ENCODE measurements at regions of chr19 and their contacts with region 1.

Region 1: GRCh38 chr19:40465557-40466150 is at the start of gene BLVRB:
- DNase-seq: peak; percentile 99 to 100
- H3K4me3 ChIP-seq: peak within 1 kb of the TSS; percentile 68 to 92
- H3K27ac ChIP-seq: peak within 1 kb of the TSS; percentile 80 to 86
- H3K4me1 ChIP-seq: peaks cover 5 to 22% of the 10 kb centered on the region in 2 donors
- H3K27me3 ChIP-seq: no peaks in the 10 kb centered on the region
- CTCF ChIP-seq: no peak
- total RNA-seq, gene BLVRB: 295 TPM

Region 2: GRCh38 chr19:40348125-40348913 is 117.3 kb before region 1 on chr19 and contains the starts of genes C19orf47 and PLD3:
- intact Hi-C with region 1: loop called (anchors 5 kb)
- DNase-seq: peak; percentile 99 to 100
- H3K4me3 ChIP-seq: peak within 1 kb of the TSS; percentile 80 to 94
- H3K27ac ChIP-seq: peak within 1 kb of the TSS; percentile 51 to 85
- H3K4me1 ChIP-seq: peaks cover 4 to 10% of the 10 kb centered on the region in 2 donors
- H3K27me3 ChIP-seq: no peaks in the 10 kb centered on the region
- CTCF ChIP-seq: no peak
- total RNA-seq, gene C19orf47: 10.4 TPM
- total RNA-seq, gene PLD3: 345 TPM

Region 3: GRCh38 chr19:40444192-40445028 is 21.2 kb before region 1 on chr19 and contains the start of gene SERTAD3:
- intact Hi-C with region 1: loop called (anchors 1 kb)
- DNase-seq: peak; percentile 92 to 99
- H3K4me3 ChIP-seq: peak within 1 kb of the TSS; percentile 93 to 96
- H3K27ac ChIP-seq: peak within 1 kb of the TSS; percentile 96 to 97
- H3K4me1 ChIP-seq: peaks cover 3 to 13% of the 10 kb centered on the region in 2 donors
- H3K27me3 ChIP-seq: no peaks in the 10 kb centered on the region
- CTCF ChIP-seq: peak in 1 of 3 experiments; percentile 44
- total RNA-seq, gene SERTAD3: 36.9 TPM

Region 4: GRCh38 chr19:40486017-40486416 is 20.4 kb after region 1 on chr19:
- intact Hi-C with region 1: no loop called
- DNase-seq: no peak
- H3K4me3 ChIP-seq: no peak overlapping the region
- H3K27ac ChIP-seq: no peak overlapping the region
- H3K4me1 ChIP-seq: no peaks in the 10 kb centered on the region
- H3K27me3 ChIP-seq: no peaks in the 10 kb centered on the region
- CTCF ChIP-seq: no peak

Region 5: DNA sequence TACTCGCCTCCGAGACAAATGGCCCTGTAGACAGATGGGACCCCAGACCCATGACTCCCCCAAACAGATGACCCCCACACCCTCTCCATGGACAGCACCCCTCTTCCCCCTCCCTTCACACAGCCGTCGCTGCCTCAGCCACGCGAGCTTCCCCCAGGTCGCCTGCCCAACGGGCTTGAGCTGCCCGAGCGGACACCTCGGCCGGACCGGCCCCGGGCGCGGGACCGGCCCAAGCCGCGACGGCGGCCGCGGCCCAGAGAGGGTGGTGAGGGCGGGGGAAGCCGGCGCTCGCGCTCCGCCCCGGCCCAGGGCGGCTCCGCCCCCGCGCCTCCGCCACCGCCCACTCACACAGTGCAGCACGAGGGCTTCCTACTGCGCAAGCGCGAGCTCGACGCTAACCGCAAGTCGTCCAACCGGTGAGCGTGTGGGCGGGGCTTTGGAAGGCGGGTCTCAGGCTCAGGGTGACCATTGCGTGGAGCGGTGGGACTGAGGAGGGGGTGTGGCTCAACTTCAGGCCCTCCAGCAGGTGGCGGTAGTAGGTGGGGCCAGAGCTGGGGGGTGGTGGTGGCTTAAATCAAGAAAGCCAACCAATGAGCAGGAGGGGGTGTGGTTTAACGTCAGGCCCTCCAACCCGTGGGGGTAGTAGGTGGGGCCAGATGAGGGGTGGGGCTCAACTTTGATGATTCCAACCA is 104.8 kb after region 1 on chr19:
- intact Hi-C with region 1: loop called (anchors 1 kb)
- DNase-seq: peak; percentile 96 to 99
- H3K4me3 ChIP-seq: peak overlapping the region; percentile 53 to 62
- H3K27ac ChIP-seq: peak overlapping the region; percentile 59 to 70
- H3K4me1 ChIP-seq: peaks cover 2 to 11% of the 10 kb centered on the region in 2 donors
- H3K27me3 ChIP-seq: peaks cover 20% of the 10 kb centered on the region
- CTCF ChIP-seq: no peak

Region 6: DNA sequence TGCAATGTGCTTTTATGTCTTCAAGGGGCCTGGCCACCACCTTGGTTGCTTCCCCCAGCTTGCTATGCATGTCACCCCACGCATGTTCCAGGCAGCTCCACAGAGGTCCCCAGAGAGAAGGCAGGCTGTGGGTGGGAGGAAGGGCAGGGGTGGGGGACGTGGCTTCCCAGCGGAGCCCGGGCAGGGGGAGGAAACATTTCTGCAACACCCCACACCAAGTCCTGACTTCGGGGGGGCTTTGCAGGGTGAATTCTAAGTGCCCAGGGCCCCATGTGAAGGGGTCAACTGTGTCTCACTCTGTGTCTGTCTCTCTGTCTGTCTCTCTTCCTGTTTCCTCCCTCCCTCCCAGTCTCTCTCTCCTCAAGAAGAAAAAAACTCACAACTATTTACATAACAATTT is 175.1 kb after region 1 on chr19:
- intact Hi-C with region 1: loop called (anchors 2 kb)
- DNase-seq: peak in 1 of 2 donors; percentile 78
- H3K4me3 ChIP-seq: peak overlapping the region in 1 of 2 donors; percentile 24
- H3K27ac ChIP-seq: peak overlapping the region; percentile 92
- H3K4me1 ChIP-seq: peaks cover 17 to 25% of the 10 kb centered on the region in 2 donors
- H3K27me3 ChIP-seq: no peaks in the 10 kb centered on the region
- CTCF ChIP-seq: no peak